ENCODE measurements at regions of chr7 and their contacts with region 1.

Region 1: GRCh38 chr7:149497456-149498261 is at the start of gene ZNF746:
- DNase-seq: peak; percentile 65 to 85
- H3K4me3 ChIP-seq: peak within 1 kb of the TSS; percentile 94
- H3K27ac ChIP-seq: 0 out of 2 replicates have a peak within 1 kb of the TSS, but pooled peaks have one; percentile 8
- H3K4me1 ChIP-seq: peaks cover 17% of the 10 kb centered on the region
- H3K27me3 ChIP-seq: no peaks in the 10 kb centered on the region
- CTCF ChIP-seq: 0 out of 2 replicates have a peak, but pooled peaks have one; percentile 24
- total RNA-seq, gene ZNF746: 19.2 and 19.3 TPM in 2 replicates

Region 2: GRCh38 chr7:149028346-149029109 is 469.1 kb before region 1 on chr7 and contains the start of gene PDIA4:
- CTCF ChIA-PET with region 1: no interaction called
- POLR2A ChIA-PET with region 1: no interaction called
- intact Hi-C with region 1: loop called (anchors 1 kb)
- DNase-seq: peak; percentile 98 to 100
- H3K4me3 ChIP-seq: peak within 1 kb of the TSS; percentile 73
- H3K27ac ChIP-seq: peak within 1 kb of the TSS; percentile 78
- H3K4me1 ChIP-seq: peaks cover 24% of the 10 kb centered on the region
- H3K27me3 ChIP-seq: no peaks in the 10 kb centered on the region
- CTCF ChIP-seq: peak; percentile 17; the same call in 1 of the 2 replicates
- total RNA-seq, gene PDIA4: 200 and 221 TPM in 2 replicates

Region 3: DNA sequence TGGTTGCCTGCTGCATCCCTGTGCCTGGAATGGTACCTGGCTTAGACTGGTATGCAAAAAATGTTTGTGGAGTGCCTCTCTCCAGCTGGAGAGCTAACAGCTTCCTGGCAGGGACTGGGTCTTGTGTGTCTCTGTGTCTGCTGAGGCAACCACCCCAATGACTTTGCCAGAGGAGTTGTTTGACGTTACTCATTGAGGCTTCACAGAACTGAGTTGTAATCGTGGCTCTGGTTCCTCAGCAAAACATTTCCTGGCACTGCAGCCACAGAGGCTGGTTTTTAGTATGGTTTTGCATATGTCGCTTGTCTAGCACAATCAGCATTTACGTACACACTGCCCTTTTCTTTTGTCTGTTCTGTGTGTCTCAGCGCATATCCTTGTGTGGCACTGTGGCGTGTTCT is 294.8 kb before region 1 on chr7:
- CTCF ChIA-PET with region 1: interaction called, 19 read pairs
- POLR2A ChIA-PET with region 1: no interaction called
- intact Hi-C with region 1: no loop called
- DNase-seq: no peak
- H3K4me3 ChIP-seq: no peak overlapping the region
- H3K27ac ChIP-seq: no peak overlapping the region
- H3K4me1 ChIP-seq: peaks cover 30% of the 10 kb centered on the region
- H3K27me3 ChIP-seq: no peaks in the 10 kb centered on the region
- CTCF ChIP-seq: no peak

Region 4: DNA sequence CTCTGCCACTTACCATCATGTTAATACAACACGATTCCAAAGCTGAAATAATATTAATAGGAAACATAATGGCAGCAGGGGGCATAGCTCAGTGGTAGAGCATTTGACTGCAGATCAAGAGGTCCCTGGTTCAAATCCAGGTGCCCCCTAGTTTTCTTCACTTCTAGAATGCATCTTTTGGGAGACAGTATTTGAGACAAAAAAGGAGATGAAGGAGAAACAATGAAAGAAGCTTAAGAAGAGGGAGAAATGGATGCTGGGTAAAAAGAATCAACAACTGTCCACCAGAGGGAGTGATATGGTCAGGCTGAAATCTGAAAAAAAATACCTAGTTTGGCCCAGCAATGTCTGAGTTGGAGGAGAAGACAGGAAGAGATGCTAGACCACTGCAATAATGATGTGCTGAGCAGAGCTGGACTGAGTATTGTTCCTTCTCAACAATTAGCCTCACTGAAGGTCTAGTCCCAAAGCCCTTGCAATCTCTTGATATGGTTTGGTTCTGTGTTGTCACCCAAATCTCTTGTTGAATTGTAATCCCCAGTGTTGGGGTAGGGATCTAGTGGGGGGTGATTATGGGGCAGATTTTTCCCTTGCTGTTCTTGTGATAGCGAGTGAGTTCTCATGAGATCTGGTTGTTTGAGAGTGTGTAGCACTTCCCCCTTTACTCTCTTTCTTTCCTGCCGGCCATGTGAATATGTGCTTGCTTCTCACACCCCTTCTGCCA is 187.4 kb before region 1 on chr7:
- CTCF ChIA-PET with region 1: no interaction called
- POLR2A ChIA-PET with region 1: no interaction called
- intact Hi-C with region 1: loop called (anchors 2 kb)
- DNase-seq: peak; percentile 36 to 78
- H3K4me3 ChIP-seq: no peak overlapping the region
- H3K27ac ChIP-seq: no peak overlapping the region
- H3K4me1 ChIP-seq: no peaks in the 10 kb centered on the region
- H3K27me3 ChIP-seq: no peaks in the 10 kb centered on the region
- CTCF ChIP-seq: peak; percentile 77

Region 5: GRCh38 chr7:149422129-149422913 is 75.3 kb before region 1 on chr7:
- CTCF ChIA-PET with region 1: no interaction called
- POLR2A ChIA-PET with region 1: no interaction called
- intact Hi-C with region 1: loop called (anchors 5 kb)
- DNase-seq: peak; percentile 69 to 90
- H3K4me3 ChIP-seq: peak overlapping the region; percentile 69
- H3K27ac ChIP-seq: no peak overlapping the region
- H3K4me1 ChIP-seq: no peaks in the 10 kb centered on the region
- H3K27me3 ChIP-seq: no peaks in the 10 kb centered on the region
- CTCF ChIP-seq: peak; percentile 43

Region 6: GRCh38 chr7:149598721-149599306 is 101.2 kb after region 1 on chr7:
- CTCF ChIA-PET with region 1: no interaction called
- POLR2A ChIA-PET with region 1: no interaction called
- intact Hi-C with region 1: loop called (anchors 10 kb)
- DNase-seq: peak in 1 of 2 experiments; percentile 63
- H3K4me3 ChIP-seq: no peak overlapping the region
- H3K27ac ChIP-seq: no peak overlapping the region
- H3K4me1 ChIP-seq: no peaks in the 10 kb centered on the region
- H3K27me3 ChIP-seq: no peaks in the 10 kb centered on the region
- CTCF ChIP-seq: peak; percentile 66

Region 7: DNA sequence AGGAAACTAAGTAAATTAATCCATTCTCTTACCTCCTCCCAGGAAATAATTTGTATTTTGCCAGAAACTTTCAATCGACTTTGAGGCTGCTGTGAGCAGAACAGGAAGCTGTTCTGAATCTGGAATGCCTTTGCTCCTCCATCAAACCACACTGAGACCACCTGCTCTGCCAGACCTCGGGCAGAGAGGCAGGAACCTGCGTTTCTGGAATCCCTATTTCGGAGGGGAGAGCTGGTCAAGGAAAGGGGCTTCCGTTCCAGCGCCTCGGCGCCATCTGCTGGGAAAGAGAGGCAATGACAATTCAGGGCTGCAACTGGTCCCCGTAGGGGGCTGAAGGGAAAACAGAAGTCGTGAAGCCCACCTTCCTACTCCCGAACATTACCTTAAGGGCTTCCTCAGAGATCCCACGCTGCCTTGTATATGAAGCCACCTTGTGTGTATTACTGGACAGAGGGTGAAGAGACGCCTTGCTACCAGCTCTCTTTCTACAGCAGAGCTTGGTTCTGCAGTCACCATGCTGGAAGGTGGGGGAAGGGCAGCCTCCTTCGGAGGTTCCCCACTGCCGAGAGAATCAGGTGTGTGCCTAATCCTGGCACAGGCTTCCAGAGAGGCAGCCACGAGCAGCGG is 244.5 kb after region 1 on chr7:
- CTCF ChIA-PET with region 1: no interaction called
- POLR2A ChIA-PET with region 1: no interaction called
- intact Hi-C with region 1: loop called (anchors 10 kb)
- DNase-seq: peak in 1 of 2 experiments; percentile 76
- H3K4me3 ChIP-seq: peak overlapping the region; percentile 54
- H3K27ac ChIP-seq: no peak overlapping the region
- H3K4me1 ChIP-seq: peaks cover 7% of the 10 kb centered on the region; the same call in 1 of the 2 replicates
- H3K27me3 ChIP-seq: 0 out of 2 replicates have a peak, but pooled peaks cover 12% of the 10 kb centered on the region
- CTCF ChIP-seq: peak; percentile 96

Measured in PC-9 (cell line).